Activated CD4-positive, alpha-beta memory T cell treated with anti-CD3 and anti-CD28 coated beads for 36 hours (primary cell): ENCODE measurements at regions of chrX and their contacts with region 1.

Region 1: DNA sequence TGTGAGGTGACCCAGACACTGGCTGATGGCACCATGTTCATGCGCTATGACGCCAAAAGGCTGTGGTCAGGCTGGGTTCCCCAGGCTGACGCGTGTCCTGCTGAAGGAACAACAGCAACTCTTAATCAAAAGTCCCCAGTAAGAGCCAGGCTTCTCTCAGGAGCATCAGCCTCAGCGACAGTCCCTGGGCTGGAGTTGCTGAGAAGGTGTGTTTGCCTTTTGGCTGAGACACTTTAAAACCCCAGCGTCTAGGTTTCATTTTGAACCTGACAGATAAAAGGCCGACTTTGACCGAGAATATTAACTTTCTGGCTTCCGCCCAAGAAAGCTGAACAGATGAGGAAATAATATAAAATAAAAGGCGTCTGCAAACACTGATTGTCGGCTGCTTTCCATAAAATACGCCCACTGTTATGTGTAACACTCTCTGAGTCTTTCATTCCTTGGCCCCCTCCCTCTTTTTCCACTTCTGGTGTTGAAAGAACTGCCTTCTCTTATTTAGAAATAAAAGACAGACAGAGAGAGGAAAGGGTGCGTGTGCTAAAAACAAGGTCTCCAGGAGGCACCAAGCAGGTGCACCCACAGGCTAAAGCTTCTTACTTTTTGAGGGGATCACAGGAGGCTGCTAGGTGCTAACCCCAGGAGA is 373.6 kb downstream of the MID1IP1 start:
- DNase-seq: peak; percentile 64
- H3K4me3 Mint-ChIP-seq: peak overlapping the region; percentile 29
- H3K27ac Mint-ChIP-seq: peak overlapping the region; percentile 79
- H3K4me1 Mint-ChIP-seq: peaks cover 33% of the 10 kb centered on the region
- H3K27me3 Mint-ChIP-seq: no peaks in the 10 kb centered on the region

Region 2: GRCh38 chrX:38458071-38458470 is 716.8 kb before region 1 on chrX:
- CTCF ChIA-PET with region 1: no interaction called
- POLR2A ChIA-PET with region 1: no interaction called
- intact Hi-C with region 1: no loop called
- DNase-seq: no peak
- H3K4me3 Mint-ChIP-seq: no peak overlapping the region
- H3K27ac Mint-ChIP-seq: no peak overlapping the region
- H3K4me1 Mint-ChIP-seq: no peaks in the 10 kb centered on the region
- H3K27me3 Mint-ChIP-seq: peaks cover 2% of the 10 kb centered on the region

Region 3: DNA sequence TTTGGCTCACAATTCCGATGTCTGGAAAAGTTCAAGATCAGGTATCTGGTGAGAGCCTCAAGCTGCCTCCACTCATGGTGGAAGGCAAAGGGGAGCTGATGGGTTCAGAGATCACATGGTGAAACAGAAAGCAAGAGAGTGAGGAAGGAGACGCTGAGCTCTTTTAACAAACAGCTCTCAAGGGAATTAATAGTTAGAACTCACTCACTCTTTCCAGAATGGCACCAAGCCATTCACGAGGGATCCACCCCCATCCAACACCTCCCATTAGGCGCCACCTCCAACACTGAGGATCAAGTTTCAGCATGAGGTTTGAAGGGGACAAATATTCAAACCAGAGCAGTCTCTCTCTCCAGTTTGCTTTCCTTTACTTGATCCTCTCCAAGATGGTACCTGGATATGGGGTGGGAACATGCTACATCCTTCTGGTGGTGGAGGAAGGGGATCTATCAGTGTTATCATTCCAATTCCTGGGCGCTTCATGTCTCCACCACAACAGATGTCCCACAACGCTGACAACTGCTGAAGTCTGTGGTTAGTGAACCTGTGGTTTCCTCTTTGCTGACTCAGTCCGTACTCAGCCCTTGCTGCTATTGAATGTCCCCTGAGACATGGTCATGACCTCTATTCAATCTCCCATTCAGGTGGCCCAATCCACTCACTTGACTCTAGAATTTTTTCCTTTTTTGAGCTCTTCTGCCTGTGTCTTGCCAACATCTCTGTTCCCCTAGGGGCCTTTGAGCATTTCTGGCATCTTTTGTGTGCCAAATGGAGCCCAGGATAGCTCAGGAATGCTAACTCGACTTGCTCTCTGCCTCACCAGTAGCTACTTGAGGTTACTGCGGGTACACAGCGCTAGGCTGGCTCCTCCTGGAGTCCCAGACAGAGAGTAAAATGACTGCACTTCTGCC is 21.6 kb after region 1 on chrX:
- CTCF ChIA-PET with region 1: interaction called, 3 read pairs
- POLR2A ChIA-PET with region 1: interaction called, 5 read pairs
- intact Hi-C with region 1: loop called (anchors 1 kb)
- DNase-seq: peak; percentile 75
- H3K4me3 Mint-ChIP-seq: peak overlapping the region; percentile 32
- H3K27ac Mint-ChIP-seq: peak overlapping the region; percentile 86
- H3K4me1 Mint-ChIP-seq: peaks cover 49% of the 10 kb centered on the region
- H3K27me3 Mint-ChIP-seq: peaks cover 2% of the 10 kb centered on the region

Region 4: DNA sequence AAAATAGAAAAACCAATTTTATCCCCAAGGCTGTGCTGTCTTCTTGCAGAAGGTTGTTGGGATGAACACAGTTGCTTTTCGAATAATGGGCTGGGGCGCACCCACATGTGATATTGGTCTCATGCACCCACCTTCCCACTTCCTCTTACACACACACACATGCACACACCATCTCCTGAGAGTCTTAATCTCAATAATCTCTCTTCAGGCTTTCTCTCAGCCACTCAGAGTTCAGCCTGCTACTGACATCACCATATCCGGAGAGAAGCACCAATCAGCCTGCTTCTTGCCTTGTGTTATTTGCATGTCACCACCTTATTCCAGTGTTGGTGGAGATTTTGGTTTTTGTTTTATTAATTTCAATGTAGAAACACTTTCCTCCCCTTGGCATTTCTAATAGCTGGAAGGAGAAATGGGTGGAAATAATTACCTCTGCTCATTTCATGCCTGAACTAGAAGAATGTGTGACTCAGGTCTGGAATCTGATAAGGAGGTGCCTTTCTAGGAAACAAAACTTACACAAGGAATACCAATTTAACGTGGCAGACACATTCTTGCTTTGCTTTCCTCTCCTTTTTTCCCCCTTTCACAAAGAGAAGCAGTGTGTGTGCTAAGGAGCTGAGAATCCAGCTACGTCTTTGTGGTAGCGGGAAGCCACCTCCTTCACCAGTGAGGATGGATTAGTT is 26.6 kb after region 1 on chrX:
- CTCF ChIA-PET with region 1: interaction called, 3 read pairs
- POLR2A ChIA-PET with region 1: interaction called, 5 read pairs
- intact Hi-C with region 1: loop called (anchors 1 kb)
- DNase-seq: peak; percentile 25
- H3K4me3 Mint-ChIP-seq: no peak overlapping the region
- H3K27ac Mint-ChIP-seq: peak overlapping the region; percentile 65
- H3K4me1 Mint-ChIP-seq: peaks cover 69% of the 10 kb centered on the region
- H3K27me3 Mint-ChIP-seq: no peaks in the 10 kb centered on the region

Region 5: GRCh38 chrX:40227125-40227524 is 1052.2 kb after region 1 on chrX:
- CTCF ChIA-PET with region 1: no interaction called
- POLR2A ChIA-PET with region 1: no interaction called
- intact Hi-C with region 1: no loop called
- DNase-seq: no peak
- H3K4me3 Mint-ChIP-seq: no peak overlapping the region
- H3K27ac Mint-ChIP-seq: no peak overlapping the region
- H3K4me1 Mint-ChIP-seq: no peaks in the 10 kb centered on the region
- H3K27me3 Mint-ChIP-seq: no peaks in the 10 kb centered on the region